AG04449 (cell line): ENCODE measurements at regions of chr12 and their contacts with region 1.

Region 1: GRCh38 chr12:442235-442884 is 17.4 kb upstream of the B4GALNT3 start:
- DNase-seq: no peak
- H3K4me3 ChIP-seq: no peak overlapping the region
- CTCF ChIP-seq: peak; percentile 74

Region 2: DNA sequence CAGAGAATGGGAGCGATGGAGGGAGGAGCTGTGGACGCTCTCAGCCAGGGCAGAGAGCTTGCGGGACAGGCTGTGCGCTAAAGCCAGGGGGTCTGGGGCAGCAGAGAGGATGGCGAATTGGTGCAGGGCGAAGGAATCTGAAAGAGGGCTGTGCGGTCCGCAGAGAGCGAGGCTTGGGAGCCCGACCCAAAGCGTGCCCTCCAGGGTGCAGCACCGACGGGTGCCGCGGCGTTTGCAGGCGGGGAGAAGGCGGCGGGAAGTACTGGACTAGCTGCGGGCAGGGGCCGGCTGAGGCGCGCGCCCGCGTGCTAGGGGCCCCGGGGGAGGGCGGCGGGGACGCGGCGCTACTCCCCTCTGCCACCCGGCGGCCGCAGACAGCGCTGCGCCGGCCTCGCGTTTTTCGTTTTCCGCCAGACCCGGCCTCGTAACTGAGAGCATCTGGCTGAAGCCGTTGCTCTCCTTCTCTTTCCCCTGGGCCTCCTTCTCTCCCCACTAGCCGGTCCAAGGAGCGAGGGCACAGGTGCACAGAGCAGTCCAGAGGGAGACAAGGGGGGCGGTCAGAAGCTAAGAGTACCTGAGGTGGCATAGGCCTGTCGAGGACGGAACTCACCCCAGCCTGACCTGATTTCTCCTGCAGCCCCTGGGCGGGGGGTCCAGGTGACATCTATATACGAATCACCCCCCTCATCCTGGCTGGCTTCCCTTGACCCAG is 253.3 kb before region 1 on chr12:
- CTCF ChIA-PET with region 1: no interaction called
- POLR2A ChIA-PET with region 1: no interaction called
- DNase-seq: no peak
- H3K4me3 ChIP-seq: peak overlapping the region; percentile 52
- CTCF ChIP-seq: peak; percentile 74

Region 3: DNA sequence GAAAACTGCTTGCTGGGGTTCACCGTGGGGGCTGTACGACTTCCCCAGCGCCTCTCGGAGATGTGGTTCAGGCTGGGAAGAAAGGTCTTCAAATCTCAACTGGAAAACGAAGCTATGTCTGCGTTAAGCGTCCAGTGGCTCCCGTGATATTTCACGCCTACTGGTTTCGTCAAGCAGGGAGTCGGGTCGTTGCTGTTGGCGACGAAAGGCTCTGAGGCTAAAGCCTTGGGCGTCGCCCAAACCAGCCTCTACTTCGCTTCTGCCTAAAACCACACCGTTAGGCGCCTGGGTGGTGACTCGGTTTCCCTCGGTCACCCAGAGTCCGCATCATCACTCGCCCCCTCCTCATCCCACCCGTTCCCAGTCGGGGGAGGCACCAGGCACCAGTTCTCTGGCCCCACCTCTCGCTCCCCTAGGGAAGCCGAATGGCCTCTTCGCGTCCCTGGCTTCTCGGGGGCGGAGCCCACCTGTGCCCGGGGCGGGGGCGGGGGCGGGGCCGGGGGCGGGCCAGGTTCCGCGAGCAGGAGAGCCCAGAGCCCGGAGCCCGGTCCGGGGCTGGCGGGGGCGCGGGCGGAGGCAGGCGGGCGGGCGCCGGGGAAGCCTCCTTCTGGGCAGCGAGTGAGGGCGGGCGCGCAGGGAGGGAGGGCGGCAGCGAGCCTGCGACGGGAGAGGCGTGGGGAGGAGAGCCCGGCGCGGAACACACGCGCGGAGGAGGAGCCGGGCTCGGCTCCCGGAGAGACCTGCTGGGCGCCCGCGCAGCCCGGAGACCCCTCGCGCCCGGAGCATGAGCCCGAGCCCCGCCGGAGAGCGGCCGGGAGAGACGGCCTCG is 17.3 kb after region 1 on chr12 and contains the start of gene B4GALNT3:
- CTCF ChIA-PET with region 1: interaction called, 157 read pairs
- POLR2A ChIA-PET with region 1: no interaction called
- DNase-seq: no peak
- H3K4me3 ChIP-seq: peak within 1 kb of the TSS; percentile 46
- CTCF ChIP-seq: no peak

Region 4: GRCh38 chr12:480831-481816 is 38.8 kb after region 1 on chr12:
- CTCF ChIA-PET with region 1: interaction called, 11 read pairs
- POLR2A ChIA-PET with region 1: no interaction called
- DNase-seq: no peak
- H3K4me3 ChIP-seq: no peak overlapping the region
- CTCF ChIP-seq: no peak

Region 5: GRCh38 chr12:553205-554000 is 111.0 kb after region 1 on chr12:
- CTCF ChIA-PET with region 1: interaction called, 347 read pairs
- POLR2A ChIA-PET with region 1: no interaction called
- DNase-seq: no peak
- H3K4me3 ChIP-seq: no peak overlapping the region
- CTCF ChIP-seq: no peak

Region 6: DNA sequence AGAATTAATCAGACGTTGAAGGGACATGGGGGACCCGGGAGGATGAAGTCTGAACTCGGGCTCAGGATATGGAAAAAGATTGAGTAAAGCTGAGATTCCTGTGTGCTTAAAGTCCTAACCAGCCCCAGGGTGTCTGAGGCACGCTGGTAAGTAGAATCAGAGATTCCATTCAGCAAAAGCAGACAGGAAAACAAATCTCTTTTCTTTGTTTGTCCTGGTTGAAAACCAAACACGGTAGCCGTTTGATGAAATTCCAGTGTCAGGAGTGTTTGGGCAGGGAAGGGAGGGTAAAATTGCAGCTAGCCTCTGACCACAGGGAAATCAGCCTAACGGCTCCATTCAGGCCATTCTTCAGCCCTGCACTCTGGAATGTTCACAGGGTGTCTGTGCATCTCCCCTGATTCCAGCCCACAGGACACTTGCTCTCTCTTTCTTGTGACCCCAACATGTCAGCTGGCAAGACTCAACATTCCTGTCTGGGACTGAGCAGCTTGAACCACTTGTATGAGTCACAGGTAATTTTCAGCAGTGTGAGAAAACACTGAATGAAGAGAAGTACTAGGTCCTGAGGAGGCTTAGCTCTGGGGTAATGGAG is 189.8 kb after region 1 on chr12:
- CTCF ChIA-PET with region 1: no interaction called
- POLR2A ChIA-PET with region 1: no interaction called
- DNase-seq: peak; percentile 84
- H3K4me3 ChIP-seq: peak overlapping the region; percentile 10; the same call in 1 of the 2 replicates
- CTCF ChIP-seq: no peak

Region 7: DNA sequence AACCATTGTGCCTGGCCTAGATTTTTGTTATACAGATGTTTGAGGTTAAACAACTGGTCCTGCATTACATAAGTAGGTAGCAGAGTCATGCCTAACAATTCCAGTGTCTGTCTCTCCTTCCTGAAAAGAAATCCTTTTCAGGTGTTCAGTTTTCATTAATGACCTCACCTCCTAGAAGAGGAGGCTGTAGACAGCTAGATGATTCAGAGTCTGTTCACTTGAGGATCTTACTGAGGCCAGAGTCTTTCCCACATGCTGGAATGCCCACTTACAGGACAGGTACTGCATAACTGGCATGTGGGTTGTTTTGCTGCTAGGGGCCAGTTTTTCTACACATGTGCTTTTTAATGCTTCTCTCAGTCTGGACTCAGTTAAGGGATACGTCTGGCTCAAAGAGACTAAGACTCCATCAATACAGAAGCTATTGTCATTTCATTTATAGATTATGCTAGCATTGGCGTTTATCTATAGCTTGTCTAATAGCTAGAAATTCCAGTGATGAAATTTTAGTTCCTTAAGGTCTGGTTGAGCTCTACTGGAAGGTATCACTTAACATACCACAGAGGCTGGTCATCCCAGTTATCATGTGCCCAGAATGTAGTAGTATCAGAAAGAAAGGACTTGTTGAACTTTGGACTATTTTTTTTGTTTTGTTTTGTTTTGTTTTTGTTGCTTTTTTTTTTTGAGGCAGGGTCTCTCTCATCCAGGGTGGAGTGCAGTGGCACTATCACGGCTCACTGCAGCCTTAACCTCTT is 755.1 kb after region 1 on chr12:
- CTCF ChIA-PET with region 1: no interaction called
- POLR2A ChIA-PET with region 1: no interaction called
- DNase-seq: no peak
- H3K4me3 ChIP-seq: no peak overlapping the region
- CTCF ChIP-seq: no peak